A673 (cell line): ENCODE measurements at regions of chr5 and their contacts with region 1.

Region 1: GRCh38 chr5:93582677-93583438 is at the start of gene NR2F1:
- DNase-seq: peak; percentile 67
- H3K4me3 ChIP-seq: peak within 1 kb of the TSS; percentile 57
- H3K27ac ChIP-seq: peak within 1 kb of the TSS; percentile 19
- H3K4me1 ChIP-seq: peaks cover 13% of the 10 kb centered on the region
- H3K27me3 ChIP-seq: peaks cover 10% of the 10 kb centered on the region
- CTCF ChIP-seq: no peak
- total RNA-seq, gene NR2F1: 3.0 and 3.5 TPM in 2 replicates

Region 2: GRCh38 chr5:91641730-91642350 is 1941.0 kb before region 1 on chr5:
- CTCF ChIA-PET with region 1: no interaction called
- POLR2A ChIA-PET with region 1: no interaction called
- intact Hi-C with region 1: loop called (anchors 10 kb)
- DNase-seq: peak; percentile 77
- H3K4me3 ChIP-seq: no peak overlapping the region
- H3K27ac ChIP-seq: no peak overlapping the region
- H3K4me1 ChIP-seq: peaks cover 11% of the 10 kb centered on the region
- H3K27me3 ChIP-seq: no peaks in the 10 kb centered on the region
- CTCF ChIP-seq: peak; percentile 71

Region 3: DNA sequence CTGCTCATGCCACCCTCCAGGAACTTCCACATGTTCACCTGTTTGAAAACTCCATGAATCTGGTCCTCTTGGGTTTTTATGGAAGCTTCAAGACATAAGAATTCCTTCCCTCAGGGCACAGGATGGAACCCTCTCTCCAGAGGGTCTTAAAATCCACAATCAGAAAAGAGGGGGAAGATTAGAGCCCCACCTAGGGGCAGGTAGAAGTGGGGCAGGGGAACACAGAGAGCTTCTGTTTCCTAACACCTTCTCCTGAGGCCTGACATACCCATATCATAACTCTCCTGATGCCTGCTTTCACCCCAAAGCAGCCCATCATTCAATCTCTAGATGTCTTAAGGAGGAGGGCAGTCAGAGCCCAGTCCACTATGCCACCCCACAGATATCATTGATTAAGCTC is 1112.1 kb before region 1 on chr5:
- CTCF ChIA-PET with region 1: no interaction called
- POLR2A ChIA-PET with region 1: interaction called, 16 read pairs
- intact Hi-C with region 1: no loop called
- DNase-seq: peak; percentile 3
- H3K4me3 ChIP-seq: no peak overlapping the region
- H3K27ac ChIP-seq: no peak overlapping the region
- H3K4me1 ChIP-seq: no peaks in the 10 kb centered on the region
- H3K27me3 ChIP-seq: no peaks in the 10 kb centered on the region
- CTCF ChIP-seq: peak; percentile 26; the same call in 1 of the 2 replicates

Region 4: GRCh38 chr5:93092349-93093105 is 490.3 kb before region 1 on chr5:
- CTCF ChIA-PET with region 1: no interaction called
- POLR2A ChIA-PET with region 1: no interaction called
- intact Hi-C with region 1: loop called (anchors 5 kb)
- DNase-seq: no peak
- H3K4me3 ChIP-seq: no peak overlapping the region
- H3K27ac ChIP-seq: no peak overlapping the region
- H3K4me1 ChIP-seq: no peaks in the 10 kb centered on the region
- H3K27me3 ChIP-seq: no peaks in the 10 kb centered on the region
- CTCF ChIP-seq: peak; percentile 24; the same call in 1 of the 2 replicates

Region 5: GRCh38 chr5:93800988-93801811 is 218.3 kb after region 1 on chr5:
- CTCF ChIA-PET with region 1: interaction called, 4 read pairs
- POLR2A ChIA-PET with region 1: no interaction called
- intact Hi-C with region 1: loop called (anchors 2 kb)
- DNase-seq: peak; percentile 63
- H3K4me3 ChIP-seq: no peak overlapping the region
- H3K27ac ChIP-seq: no peak overlapping the region
- H3K4me1 ChIP-seq: peaks cover 3% of the 10 kb centered on the region
- H3K27me3 ChIP-seq: no peaks in the 10 kb centered on the region
- CTCF ChIP-seq: peak; percentile 77

Region 6: DNA sequence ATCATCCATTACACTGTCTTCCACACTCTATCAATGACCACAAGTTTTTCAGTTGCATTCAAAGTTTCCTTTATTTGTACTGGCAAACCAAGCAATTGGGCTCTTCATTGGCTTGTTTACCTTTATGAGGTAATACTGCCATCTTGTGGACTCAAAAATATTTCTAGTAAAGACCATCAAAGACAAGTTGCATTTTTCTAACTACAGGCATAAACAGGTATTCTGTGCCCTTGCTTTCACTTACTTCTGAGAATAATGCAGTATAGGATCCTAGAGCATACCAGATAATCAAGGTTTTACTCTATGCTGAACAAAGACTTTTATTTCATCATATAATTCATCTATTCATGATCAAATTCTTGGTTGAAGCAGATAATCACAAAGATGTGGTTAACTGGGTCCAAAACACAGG is 332.3 kb after region 1 on chr5:
- CTCF ChIA-PET with region 1: no interaction called
- POLR2A ChIA-PET with region 1: no interaction called
- intact Hi-C with region 1: loop called (anchors 2 kb)
- DNase-seq: peak; percentile 71
- H3K4me3 ChIP-seq: no peak overlapping the region
- H3K27ac ChIP-seq: no peak overlapping the region
- H3K4me1 ChIP-seq: no peaks in the 10 kb centered on the region
- H3K27me3 ChIP-seq: no peaks in the 10 kb centered on the region
- CTCF ChIP-seq: peak; percentile 64

Region 7: GRCh38 chr5:94218374-94218773 is 635.5 kb after region 1 on chr5:
- CTCF ChIA-PET with region 1: no interaction called
- POLR2A ChIA-PET with region 1: no interaction called
- intact Hi-C with region 1: no loop called
- DNase-seq: no peak
- H3K4me3 ChIP-seq: no peak overlapping the region
- H3K27ac ChIP-seq: no peak overlapping the region
- H3K4me1 ChIP-seq: no peaks in the 10 kb centered on the region
- H3K27me3 ChIP-seq: no peaks in the 10 kb centered on the region
- CTCF ChIP-seq: no peak